Activated CD4-positive, alpha-beta memory T cell treated with anti-CD3 and anti-CD28 coated beads, Interleukin-2, amount 10 ng/mL, durations not matched to agents 7 days and 5 days (primary cell): ENCODE measurements at regions of chr1 and their contacts with region 1.

Region 1: DNA sequence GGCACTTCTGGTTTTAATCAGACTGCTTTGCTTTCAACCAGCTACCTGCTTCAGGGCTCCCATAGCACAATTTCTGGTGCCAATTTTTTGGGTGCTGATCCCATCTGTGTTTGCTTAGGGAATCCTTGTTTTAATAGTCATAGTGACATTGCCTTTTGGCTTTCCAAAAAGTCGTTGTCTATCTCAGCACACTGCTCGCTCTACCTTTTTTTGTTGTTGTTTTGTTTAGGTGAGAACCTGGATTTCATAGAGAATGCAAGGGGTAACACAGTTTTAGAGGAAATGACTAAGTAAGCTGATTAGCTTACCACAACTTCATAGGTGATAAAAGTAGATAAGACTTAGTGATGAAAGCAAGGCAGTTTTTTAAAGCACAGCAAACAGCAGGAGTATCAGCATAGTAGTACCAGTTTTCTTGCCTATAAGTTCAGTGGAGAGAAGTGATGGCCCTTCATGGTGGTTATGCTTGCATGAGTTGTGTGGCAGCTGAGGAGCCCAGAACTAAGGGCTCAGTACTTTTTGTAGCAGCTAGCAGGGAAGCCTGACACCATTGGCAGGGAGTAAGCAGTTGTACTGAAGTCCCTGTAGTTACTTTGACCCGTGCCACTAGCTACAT is 31.3 kb downstream of the NEK7 start:
- DNase-seq: peak; percentile 36
- H3K4me3 Mint-ChIP-seq: peak overlapping the region; percentile 46
- H3K27ac Mint-ChIP-seq: peak overlapping the region; percentile 78
- H3K4me1 Mint-ChIP-seq: peaks cover 78% of the 10 kb centered on the region
- H3K27me3 Mint-ChIP-seq: no peaks in the 10 kb centered on the region

Region 2: DNA sequence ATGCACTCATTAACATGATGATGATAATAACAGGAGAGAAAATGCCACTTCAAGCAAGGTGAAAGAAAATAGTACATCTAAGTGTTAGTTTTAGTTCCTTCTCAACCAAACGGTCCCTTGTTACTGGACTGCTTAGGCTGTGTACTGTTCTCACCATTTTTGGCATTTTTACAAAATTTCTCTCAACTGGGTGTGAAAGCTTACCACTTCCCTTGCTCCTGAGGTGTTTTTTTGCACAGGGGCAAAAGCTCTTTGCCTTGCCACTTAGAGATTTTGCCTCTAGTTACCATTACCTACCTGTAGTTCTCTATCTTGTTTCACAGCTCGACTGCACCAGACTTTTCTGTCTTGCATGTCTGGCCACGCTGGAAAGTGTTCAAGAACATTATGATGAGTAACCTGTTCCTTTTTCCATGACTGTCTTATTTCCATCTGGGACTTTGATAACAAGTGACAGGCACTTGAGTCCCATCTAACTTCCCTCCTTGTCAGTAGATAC is 20.6 kb before region 1 on chr1:
- CTCF ChIA-PET with region 1: interaction called, 4 read pairs
- POLR2A ChIA-PET with region 1: interaction called, 11 read pairs
- DNase-seq: peak; percentile 32
- H3K4me3 Mint-ChIP-seq: peak overlapping the region; percentile 50
- H3K27ac Mint-ChIP-seq: peak overlapping the region; percentile 79
- H3K4me1 Mint-ChIP-seq: peaks cover 78% of the 10 kb centered on the region
- H3K27me3 Mint-ChIP-seq: no peaks in the 10 kb centered on the region